ENCODE measurements at regions of chr5 and their contacts with region 1.

Region 1: GRCh38 chr5:1208743-1209506 is 7.5 kb downstream of the SLC6A19 start:
- DNase-seq: no peak
- H3K4me3 ChIP-seq: no peak overlapping the region
- H3K27ac ChIP-seq: no peak overlapping the region
- H3K4me1 ChIP-seq: no peaks in the 10 kb centered on the region
- H3K27me3 ChIP-seq: peaks cover 44% of the 10 kb centered on the region
- CTCF ChIP-seq: peak; percentile 46

Region 2: GRCh38 chr5:821504-821903 is 387.4 kb before region 1 on chr5:
- CTCF ChIA-PET with region 1: no interaction called
- POLR2A ChIA-PET with region 1: no interaction called
- intact Hi-C with region 1: no loop called
- DNase-seq: no peak
- H3K4me3 ChIP-seq: no peak overlapping the region
- H3K27ac ChIP-seq: no peak overlapping the region
- H3K4me1 ChIP-seq: no peaks in the 10 kb centered on the region
- H3K27me3 ChIP-seq: no peaks in the 10 kb centered on the region
- CTCF ChIP-seq: no peak

Region 3: DNA sequence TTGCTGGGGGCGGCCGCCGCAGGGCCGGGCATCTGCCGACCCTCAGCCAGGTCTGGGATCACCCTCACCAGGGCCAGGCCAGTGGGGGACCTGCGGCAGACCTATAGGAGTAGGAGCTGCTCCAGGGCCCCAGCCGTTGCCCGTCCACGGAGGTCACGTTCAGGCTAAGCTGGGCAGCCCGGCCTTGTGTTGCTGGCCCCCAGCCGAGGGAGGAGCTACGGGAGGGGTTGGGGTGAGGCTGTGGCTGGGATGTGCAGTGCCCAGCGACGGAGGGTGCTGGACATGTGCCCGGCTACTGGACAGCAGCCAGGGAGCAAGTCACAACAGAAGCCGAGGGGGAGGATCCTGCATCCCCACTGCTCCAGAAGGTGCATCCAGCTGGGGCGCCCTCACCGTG is 47.1 kb before region 1 on chr5:
- CTCF ChIA-PET with region 1: no interaction called
- POLR2A ChIA-PET with region 1: no interaction called
- intact Hi-C with region 1: no loop called
- DNase-seq: no peak
- H3K4me3 ChIP-seq: no peak overlapping the region
- H3K27ac ChIP-seq: no peak overlapping the region
- H3K4me1 ChIP-seq: no peaks in the 10 kb centered on the region
- H3K27me3 ChIP-seq: peaks cover under 1% of the 10 kb centered on the region
- CTCF ChIP-seq: no peak

Region 4: DNA sequence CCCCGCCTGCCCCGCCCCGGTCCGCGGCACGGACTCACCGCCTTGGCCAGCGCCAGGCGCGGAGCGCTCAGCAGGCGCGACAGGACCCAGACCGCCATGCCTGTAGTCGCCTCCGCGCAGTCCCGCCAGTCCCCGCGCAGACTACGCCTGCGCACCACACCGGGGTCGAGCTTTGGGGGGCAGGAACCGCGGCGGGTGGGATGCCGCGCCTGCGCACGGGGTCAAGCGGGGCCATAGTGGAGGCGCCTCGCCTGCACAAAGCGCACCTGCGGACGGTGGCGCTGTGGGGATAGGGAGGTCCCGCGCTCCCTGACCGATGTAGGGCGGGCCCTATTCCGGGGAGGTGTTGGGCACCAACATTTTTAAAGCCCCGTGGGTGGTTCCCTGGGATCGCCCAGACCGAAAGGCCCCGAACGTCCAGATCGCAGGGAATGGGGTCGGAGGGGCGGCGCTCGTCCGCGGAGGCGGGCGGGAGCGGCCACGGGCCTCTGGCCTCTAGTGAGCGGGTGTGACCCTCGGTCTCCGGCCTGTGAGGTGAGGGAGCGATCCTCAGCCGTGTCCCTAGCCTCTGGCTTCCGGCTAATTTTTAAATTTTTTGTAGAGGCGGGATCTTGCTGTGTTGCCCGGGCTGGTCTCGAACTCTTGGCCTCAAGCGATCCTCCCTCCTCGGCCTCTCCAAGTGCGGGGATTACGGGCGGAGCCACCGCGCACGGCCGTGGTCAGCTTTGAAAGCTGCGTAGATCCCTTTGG is 385.6 kb after region 1 on chr5:
- CTCF ChIA-PET with region 1: no interaction called
- POLR2A ChIA-PET with region 1: interaction called, 11 read pairs
- intact Hi-C with region 1: no loop called
- DNase-seq: peak; percentile 87
- H3K4me3 ChIP-seq: peak overlapping the region; percentile 58
- H3K27ac ChIP-seq: peak overlapping the region; percentile 60
- H3K4me1 ChIP-seq: no peaks in the 10 kb centered on the region
- H3K27me3 ChIP-seq: no peaks in the 10 kb centered on the region
- CTCF ChIP-seq: peak; percentile 63

Region 5: GRCh38 chr5:2320611-2321010 is 1111.7 kb after region 1 on chr5:
- CTCF ChIA-PET with region 1: no interaction called
- POLR2A ChIA-PET with region 1: no interaction called
- intact Hi-C with region 1: no loop called
- DNase-seq: no peak
- H3K4me3 ChIP-seq: no peak overlapping the region
- H3K27ac ChIP-seq: no peak overlapping the region
- H3K4me1 ChIP-seq: no peaks in the 10 kb centered on the region
- H3K27me3 ChIP-seq: no peaks in the 10 kb centered on the region
- CTCF ChIP-seq: no peak

Measured in A673 (cell line).